Activated T-helper 1 cell treated with anti-CD3 and anti-CD28 coated beads, Interleukin-12 subunit alpha, Interleukin-12 subunit beta, Interleukin-2, Interleukin-4 antibody, amounts not matched to agents 30 ng/mL and 10 ng/mL and 1 ng/mL, durations not matched to agents 14 hours and 24 hours and 36 hours (primary cell): ENCODE measurements at regions of chr20 and their contacts with region 1.

Region 1: DNA sequence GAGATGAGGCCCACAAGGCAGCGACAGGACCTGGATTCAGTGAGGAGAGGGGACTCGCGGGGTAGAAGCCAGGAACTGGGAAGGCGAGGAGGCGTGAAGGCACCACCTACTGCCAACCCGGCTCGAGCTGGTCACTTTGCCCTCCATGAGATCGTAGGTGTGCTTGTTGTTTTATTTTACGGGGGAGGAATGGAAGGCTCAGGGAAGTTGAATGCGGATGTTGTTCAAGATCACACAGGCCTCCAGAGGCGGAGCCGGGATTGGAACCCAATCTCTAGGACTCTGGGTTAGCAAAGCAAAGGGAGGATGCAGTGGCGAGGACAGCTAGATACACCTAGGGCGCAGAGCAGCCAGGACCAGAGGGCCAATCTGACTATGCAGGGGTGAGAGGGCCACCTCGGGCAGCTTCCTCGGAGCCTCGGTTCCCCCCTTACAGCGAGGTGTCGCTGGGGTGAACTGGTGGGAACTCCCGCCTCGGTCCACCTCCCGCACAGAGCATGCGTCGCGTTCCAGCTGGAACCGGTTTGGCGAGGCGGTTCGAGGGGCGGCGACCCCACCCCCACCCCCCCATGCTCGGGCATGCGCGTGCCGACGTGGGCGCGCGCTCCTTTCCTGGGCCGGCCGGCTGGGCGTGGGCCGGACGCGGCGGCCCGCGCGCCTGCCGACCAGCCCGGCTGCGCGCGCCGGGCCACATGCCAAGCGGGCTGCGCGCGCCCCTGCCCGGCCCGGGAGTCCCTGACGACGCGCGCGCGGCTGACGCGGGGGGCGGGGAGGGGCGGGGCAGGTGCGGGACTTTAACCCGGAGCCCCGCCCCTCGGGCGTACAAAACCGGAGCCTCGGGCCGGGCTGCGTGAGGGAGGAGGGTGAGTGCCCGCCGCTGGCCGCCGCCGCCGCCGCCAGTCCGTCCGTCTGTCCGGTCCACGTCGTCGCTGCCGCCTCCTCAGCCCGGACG is 80.4 kb upstream of the MYL9 start:
- DNase-seq: peak; percentile 81
- H3K4me3 Mint-ChIP-seq: peak overlapping the region; percentile 70
- H3K27ac Mint-ChIP-seq: peak overlapping the region; percentile 87
- H3K4me1 Mint-ChIP-seq: peaks cover 48% of the 10 kb centered on the region
- H3K27me3 Mint-ChIP-seq: peaks cover 5% of the 10 kb centered on the region

Region 2: GRCh38 chr20:35741892-35742740 is 718.8 kb before region 1 on chr20 and contains the start of gene RBM39:
- intact Hi-C with region 1: loop called (anchors 5 kb)
- DNase-seq: peak; percentile 100
- H3K4me3 Mint-ChIP-seq: peak within 1 kb of the TSS; percentile 98
- H3K27ac Mint-ChIP-seq: peak within 1 kb of the TSS; percentile 99
- H3K4me1 Mint-ChIP-seq: peaks cover 40% of the 10 kb centered on the region
- H3K27me3 Mint-ChIP-seq: no peaks in the 10 kb centered on the region
- total RNA-seq, gene RBM39: 349 and 357 TPM in 2 replicates

Region 3: GRCh38 chr20:36491901-36492617 is 31.1 kb after region 1 on chr20:
- intact Hi-C with region 1: loop called (anchors 1 kb)
- DNase-seq: peak; percentile 57
- H3K4me3 Mint-ChIP-seq: peak overlapping the region; percentile 27
- H3K27ac Mint-ChIP-seq: peak overlapping the region; percentile 76
- H3K4me1 Mint-ChIP-seq: peaks cover 30% of the 10 kb centered on the region
- H3K27me3 Mint-ChIP-seq: no peaks in the 10 kb centered on the region

Region 4: DNA sequence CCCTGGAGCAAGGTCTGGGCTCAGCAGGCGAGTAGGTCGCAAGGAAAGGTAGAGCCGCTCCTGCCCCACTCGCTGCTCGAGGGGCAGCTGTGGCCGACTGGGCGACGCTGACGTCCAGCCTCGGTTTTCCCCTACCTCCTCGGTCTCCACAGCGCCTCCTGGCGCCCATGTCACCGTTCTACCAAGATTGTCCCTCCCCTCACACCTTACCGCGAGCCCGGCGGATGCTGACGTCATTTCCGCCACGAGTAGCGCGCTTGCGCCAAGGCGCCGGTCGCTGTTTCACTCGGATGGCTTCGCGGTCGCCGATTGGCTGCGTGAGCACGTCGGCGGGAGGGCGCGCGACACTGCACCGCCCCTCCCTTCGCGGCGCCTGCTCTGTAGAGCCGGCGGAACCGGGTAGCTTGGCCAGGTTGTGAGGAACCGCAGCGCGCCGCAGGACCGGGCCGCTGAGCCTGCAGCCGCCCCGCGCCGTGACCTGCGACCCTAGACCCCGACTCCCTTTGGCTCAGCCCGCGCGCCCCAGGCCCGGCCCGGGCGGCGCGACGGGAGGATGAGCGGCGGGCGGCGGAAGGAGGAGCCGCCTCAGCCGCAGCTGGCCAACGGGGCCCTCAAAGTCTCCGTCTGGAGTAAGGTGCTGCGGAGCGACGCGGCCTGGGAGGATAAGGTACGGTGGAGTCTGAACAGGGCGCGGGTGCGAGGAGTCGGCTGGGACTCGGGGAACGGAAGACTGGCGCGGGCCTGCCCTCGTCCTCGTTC is 144.7 kb after region 1 on chr20 and contains the start of gene RAB5IF:
- intact Hi-C with region 1: loop called (anchors 1 kb)
- DNase-seq: peak; percentile 100
- H3K4me3 Mint-ChIP-seq: peak within 1 kb of the TSS; percentile 98
- H3K27ac Mint-ChIP-seq: peak within 1 kb of the TSS; percentile 94
- H3K4me1 Mint-ChIP-seq: peaks cover 32% of the 10 kb centered on the region
- H3K27me3 Mint-ChIP-seq: peaks cover 2% of the 10 kb centered on the region
- total RNA-seq, gene RAB5IF: 112 and 119 TPM in 2 replicates

Region 5: DNA sequence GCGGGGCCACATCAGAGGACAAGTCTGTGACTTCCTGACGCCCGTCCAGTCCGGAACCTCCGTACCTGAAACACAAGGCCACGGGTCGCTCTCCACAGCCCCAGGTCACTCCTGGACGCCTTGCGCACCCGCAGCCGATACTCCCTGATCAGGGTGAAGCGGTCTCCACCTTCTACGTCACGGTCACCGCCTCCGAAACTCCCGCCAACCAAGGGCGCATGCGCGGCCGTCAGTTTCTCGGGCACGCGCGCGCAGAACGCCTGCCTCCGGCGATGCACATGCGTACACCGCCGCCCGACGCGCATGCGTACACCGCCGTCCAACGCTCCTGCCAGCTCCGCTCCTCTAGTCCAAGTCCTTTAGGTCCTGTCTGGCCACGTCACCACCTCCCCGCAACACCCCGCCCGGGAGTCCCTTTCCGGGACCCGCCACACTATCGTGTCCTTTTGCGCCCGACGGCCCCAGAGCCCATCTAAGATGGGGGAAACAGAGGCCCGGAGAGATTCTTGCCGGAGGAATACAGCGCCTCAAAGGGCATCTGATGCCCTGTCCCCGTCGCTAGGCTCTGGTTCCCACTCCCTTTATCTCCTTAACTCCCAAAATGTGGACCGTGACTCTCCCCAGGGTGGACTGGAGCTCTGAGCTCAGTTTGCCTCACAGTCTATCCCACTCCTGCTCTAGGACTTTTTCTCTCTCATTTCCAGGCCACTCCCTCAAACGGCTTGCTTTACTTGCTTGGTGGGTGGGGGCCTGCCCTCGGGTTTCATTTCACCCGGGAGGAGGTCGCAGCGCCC is 312.9 kb after region 1 on chr20 and contains the start of gene DSN1:
- intact Hi-C with region 1: loop called (anchors 2 kb)
- DNase-seq: peak; percentile 98
- H3K4me3 Mint-ChIP-seq: peak within 1 kb of the TSS; percentile 86
- H3K27ac Mint-ChIP-seq: peak within 1 kb of the TSS; percentile 95
- H3K4me1 Mint-ChIP-seq: peaks cover 48% of the 10 kb centered on the region
- H3K27me3 Mint-ChIP-seq: peaks cover 6% of the 10 kb centered on the region
- total RNA-seq, gene DSN1: 23.2 and 29.0 TPM in 2 replicates

Region 6: DNA sequence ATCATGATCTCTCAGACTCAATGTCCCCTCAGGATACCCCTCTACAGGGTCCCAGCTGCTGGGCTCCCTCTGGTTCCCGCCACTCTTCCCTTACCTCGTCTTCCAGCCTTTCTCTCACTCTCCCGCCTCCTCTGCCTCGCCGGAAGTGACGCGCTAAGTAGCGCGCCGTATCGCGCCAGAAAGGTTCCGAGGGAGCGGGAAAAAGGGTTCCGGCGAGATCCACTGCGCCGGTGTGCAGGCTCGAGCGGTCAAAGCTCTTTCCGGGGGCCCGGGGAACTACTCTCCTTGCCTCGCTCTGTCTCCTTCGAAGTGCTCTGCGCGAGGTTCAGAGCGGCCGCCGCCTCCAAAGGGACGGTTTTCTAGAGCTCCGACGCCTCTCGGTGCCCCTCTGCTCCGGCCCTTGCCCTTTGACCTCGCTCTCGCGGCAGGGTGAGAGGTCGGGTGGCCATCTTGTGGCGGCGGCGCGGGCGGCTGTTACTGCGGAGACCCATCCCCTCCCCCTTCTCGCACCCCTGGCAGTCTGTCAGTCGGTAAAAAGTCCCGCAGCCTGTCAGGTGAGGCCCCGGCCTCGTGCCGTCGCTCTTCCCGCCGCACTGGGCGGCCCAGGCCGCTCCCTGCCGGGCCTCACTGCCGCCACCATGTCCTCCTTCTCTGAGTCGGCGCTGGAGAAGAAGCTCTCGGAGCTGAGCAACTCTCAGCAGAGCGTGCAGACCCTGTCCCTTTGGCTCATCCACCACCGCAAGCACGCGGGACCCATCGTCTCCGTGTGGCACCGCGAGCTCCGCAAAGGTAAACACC is 1572.6 kb after region 1 on chr20 and contains the starts of genes RPRD1B and TTI1:
- intact Hi-C with region 1: loop called (anchors 5 kb)
- DNase-seq: peak; percentile 87
- H3K4me3 Mint-ChIP-seq: peak within 1 kb of the TSS; percentile 96
- H3K27ac Mint-ChIP-seq: peak within 1 kb of the TSS; percentile 99
- H3K4me1 Mint-ChIP-seq: peaks cover 72% of the 10 kb centered on the region
- H3K27me3 Mint-ChIP-seq: no peaks in the 10 kb centered on the region
- total RNA-seq, gene RPRD1B: 48.8 and 49.7 TPM in 2 replicates
- total RNA-seq, gene TTI1: 41.7 and 43.1 TPM in 2 replicates